ENCODE measurements at regions of chr11 and their contacts with region 1.

Region 1: DNA sequence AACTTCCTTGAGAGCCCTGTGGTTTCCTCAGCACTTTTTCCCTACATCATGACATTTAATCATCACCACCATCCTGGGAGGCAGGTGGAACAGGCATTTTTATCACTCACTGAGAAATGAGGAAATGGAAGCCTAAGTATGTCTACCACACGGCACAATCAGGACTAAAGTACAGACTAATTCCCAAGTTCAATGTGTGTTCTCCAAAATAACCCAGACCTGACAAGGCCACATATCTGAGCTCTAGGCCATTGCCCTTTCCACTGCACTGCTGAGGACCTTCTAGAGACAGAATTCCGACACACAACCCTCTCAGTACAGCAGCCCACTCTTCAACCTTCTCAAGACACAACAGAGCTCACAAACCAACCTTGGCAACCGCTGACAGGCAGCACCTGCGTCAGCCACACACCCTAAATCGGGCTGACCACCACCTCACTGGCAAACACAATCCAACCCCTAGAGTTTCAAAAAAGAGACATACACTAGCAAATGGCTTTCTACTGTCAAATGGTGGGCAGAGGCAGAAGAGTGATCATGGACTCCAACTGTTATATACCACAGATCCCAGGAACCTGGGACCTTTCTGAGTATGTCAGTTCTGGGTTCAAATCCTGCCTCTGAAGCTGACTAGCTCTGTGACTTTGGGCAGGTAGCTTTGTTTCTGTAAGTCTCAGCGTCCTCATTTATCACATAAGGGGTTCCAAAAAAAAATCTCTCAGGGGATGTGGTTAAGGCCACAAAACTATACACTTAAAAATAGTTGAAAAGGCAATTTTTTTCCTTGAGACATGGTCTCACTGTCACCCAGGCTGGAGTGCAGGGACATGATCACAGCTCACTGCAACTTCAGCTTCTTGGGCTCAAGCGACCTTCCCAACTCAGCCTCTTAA is 16.3 kb downstream of the SMCO4 start:
- DNase-seq: no peak
- H3K4me3 ChIP-seq: no peak overlapping the region
- H3K27ac ChIP-seq: no peak overlapping the region
- H3K4me1 ChIP-seq: peaks cover 5% of the 10 kb centered on the region
- H3K27me3 ChIP-seq: no peaks in the 10 kb centered on the region
- CTCF ChIP-seq: no peak

Region 2: DNA sequence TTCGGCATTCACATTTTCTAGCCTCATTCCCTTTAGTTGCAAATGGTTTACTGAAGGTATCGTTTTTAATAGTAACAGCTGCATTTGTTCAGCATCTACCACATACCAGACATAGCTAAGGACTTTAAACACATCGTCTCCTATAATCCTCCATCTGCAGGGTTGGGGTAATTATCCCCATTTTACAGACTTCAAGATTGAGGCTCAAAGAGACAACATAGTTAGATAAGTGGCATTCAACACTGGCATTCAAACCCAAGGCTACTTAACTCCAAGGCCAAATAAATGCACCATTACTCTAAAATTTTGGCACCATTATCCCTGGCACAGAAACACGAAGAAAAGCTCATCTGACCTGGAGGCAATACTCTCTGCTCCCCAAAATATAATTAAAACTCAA is 12.2 kb before region 1 on chr11:
- CTCF ChIA-PET with region 1: no interaction called
- POLR2A ChIA-PET with region 1: interaction called, 10 read pairs
- intact Hi-C with region 1: no loop called
- DNase-seq: no peak
- H3K4me3 ChIP-seq: no peak overlapping the region
- H3K27ac ChIP-seq: no peak overlapping the region
- H3K4me1 ChIP-seq: no peaks in the 10 kb centered on the region
- H3K27me3 ChIP-seq: no peaks in the 10 kb centered on the region
- CTCF ChIP-seq: no peak

Region 3: GRCh38 chr11:93541884-93542810 is 15.2 kb after region 1 on chr11:
- CTCF ChIA-PET with region 1: no interaction called
- POLR2A ChIA-PET with region 1: no interaction called
- intact Hi-C with region 1: no loop called
- DNase-seq: peak; percentile 68
- H3K4me3 ChIP-seq: peak overlapping the region; percentile 67
- H3K27ac ChIP-seq: no peak overlapping the region
- H3K4me1 ChIP-seq: no peaks in the 10 kb centered on the region
- H3K27me3 ChIP-seq: no peaks in the 10 kb centered on the region
- CTCF ChIP-seq: no peak

Measured in A673 (cell line).